ENCODE measurements at regions of chr1 and their contacts with region 1.

Region 1: DNA sequence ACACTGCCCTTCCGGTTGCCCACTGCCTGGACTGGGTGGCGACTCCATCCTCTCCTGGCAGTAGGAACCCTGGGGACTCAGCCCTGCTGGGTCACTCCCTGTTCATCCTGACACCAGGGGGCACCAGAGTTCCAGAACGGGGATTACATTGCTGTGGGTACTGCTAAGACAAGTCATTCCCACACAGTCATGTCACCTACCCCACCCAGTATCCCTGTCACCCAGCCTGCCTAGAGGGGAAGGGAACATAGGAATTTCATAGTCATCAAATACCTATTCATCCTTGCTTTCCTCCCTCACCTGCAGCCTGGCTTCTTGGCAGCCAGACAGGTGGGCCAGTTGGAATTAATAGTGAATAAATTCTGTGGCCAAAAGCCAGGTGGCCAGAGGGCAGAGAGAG is 9.8 kb upstream of the SFN start:
- DNase-seq: peak; percentile 64 to 75 (median 69)
- H3K4me3 ChIP-seq: no peak overlapping the region
- H3K4me3 Mint-ChIP-seq: no peak overlapping the region
- H3K27ac ChIP-seq: no peak overlapping the region
- H3K27ac Mint-ChIP-seq: peak overlapping the region in 2 of 7 donors; percentile 11 to 52
- H3K4me1 ChIP-seq: no peaks in the 10 kb centered on the region
- H3K4me1 Mint-ChIP-seq: peaks cover 1 to 9% (median 4%) of the 10 kb centered on the region in 4 donors
- H3K27me3 ChIP-seq: no peaks in the 10 kb centered on the region
- H3K27me3 Mint-ChIP-seq: no peaks in the 10 kb centered on the region

Region 2: GRCh38 chr1:26833432-26834405 is 19.4 kb before region 1 on chr1:
- CTCF ChIA-PET with region 1: interaction called, 12 read pairs
- POLR2A ChIA-PET with region 1: interaction called, 11 read pairs
- intact Hi-C with region 1: no loop called
- DNase-seq: peak; percentile 89 to 98 (median 94)
- H3K4me3 ChIP-seq: peak overlapping the region in 1 of 2 donors; percentile 23
- H3K4me3 Mint-ChIP-seq: peak overlapping the region; percentile 74 to 92 (median 85)
- H3K27ac ChIP-seq: peak overlapping the region; percentile 97
- H3K27ac Mint-ChIP-seq: peak overlapping the region; percentile 98 to 100 (median 100)
- H3K4me1 ChIP-seq: peaks cover 74% of the 10 kb centered on the region
- H3K4me1 Mint-ChIP-seq: peaks cover 60 to 87% (median 73%) of the 10 kb centered on the region in 4 donors
- H3K27me3 ChIP-seq: no peaks in the 10 kb centered on the region
- H3K27me3 Mint-ChIP-seq: no peaks in the 10 kb centered on the region

Region 3: GRCh38 chr1:26877326-26877725 is 24.2 kb after region 1 on chr1:
- CTCF ChIA-PET with region 1: interaction called, 25 read pairs
- POLR2A ChIA-PET with region 1: no interaction called
- intact Hi-C with region 1: loop called (anchors 1 kb)
- DNase-seq: no peak
- H3K4me3 ChIP-seq: no peak overlapping the region
- H3K4me3 Mint-ChIP-seq: no peak overlapping the region
- H3K27ac ChIP-seq: no peak overlapping the region
- H3K27ac Mint-ChIP-seq: no peak overlapping the region
- H3K4me1 ChIP-seq: no peaks in the 10 kb centered on the region
- H3K4me1 Mint-ChIP-seq: peaks cover 0 to 1% (median under 1%) of the 10 kb centered on the region in 4 donors
- H3K27me3 ChIP-seq: no peaks in the 10 kb centered on the region
- H3K27me3 Mint-ChIP-seq: no peaks in the 10 kb centered on the region

Region 4: DNA sequence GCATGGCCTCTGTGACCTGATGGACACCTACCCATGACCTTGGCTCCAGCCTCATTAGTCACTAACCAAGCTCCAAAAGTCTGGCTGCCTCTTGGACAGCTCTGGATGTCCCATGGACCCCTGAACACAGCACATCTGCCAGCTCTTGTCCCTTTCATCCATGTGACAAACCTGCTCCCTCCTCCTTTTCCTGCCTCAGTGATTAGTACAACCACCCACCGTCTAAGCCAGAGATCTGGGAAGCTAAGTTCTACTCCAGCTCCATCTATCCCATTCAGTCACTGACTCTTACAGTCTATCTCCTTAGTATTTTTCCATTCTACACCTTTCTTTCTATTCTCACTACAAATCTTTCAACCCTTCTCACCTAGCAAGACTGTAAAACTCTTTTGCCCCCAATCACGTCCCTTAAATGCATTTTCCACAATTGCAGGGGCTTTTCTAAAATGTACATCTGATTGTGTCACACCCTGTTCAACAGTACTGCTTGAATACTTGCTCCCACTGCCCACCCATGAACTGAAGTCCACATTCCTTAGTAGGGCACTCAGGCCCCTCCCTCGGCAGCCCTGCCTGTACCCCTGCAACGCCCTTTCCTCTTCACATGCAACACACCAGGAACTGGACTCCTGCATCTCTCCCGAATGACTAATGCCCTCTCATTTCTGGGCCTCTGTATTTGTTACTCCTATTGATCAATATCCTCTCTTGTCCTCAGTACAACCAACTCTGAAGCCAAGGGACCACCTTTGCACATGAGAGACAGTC is 29.7 kb after region 1 on chr1:
- CTCF ChIA-PET with region 1: interaction called, 25 read pairs
- POLR2A ChIA-PET with region 1: interaction called, 3 read pairs
- intact Hi-C with region 1: loop called (anchors 1 kb)
- DNase-seq: no peak
- H3K4me3 ChIP-seq: no peak overlapping the region
- H3K4me3 Mint-ChIP-seq: no peak overlapping the region
- H3K27ac ChIP-seq: no peak overlapping the region
- H3K27ac Mint-ChIP-seq: peak overlapping the region in 4 of 7 donors; percentile 7 to 82 (median 22)
- H3K4me1 ChIP-seq: peaks cover 6% of the 10 kb centered on the region
- H3K4me1 Mint-ChIP-seq: peaks cover 6 to 14% (median 10%) of the 10 kb centered on the region in 4 donors
- H3K27me3 ChIP-seq: no peaks in the 10 kb centered on the region
- H3K27me3 Mint-ChIP-seq: no peaks in the 10 kb centered on the region

Measured in CD4-positive, alpha-beta memory T cell (primary cell).